WTC11 (cell line): ENCODE measurements at regions of chr15 and their contacts with region 1.

Region 1: GRCh38 chr15:47196057-47196456 is 521.2 kb upstream of the SEMA6D start:
- DNase-seq: peak; percentile 83
- ATAC-seq: peak; percentile 94
- H3K4me3 Mint-ChIP-seq: peak overlapping the region; percentile 47
- H3K27ac Mint-ChIP-seq: no peak overlapping the region
- H3K4me1 Mint-ChIP-seq: peaks cover 46% of the 10 kb centered on the region
- H3K27me3 Mint-ChIP-seq: peaks cover 30% of the 10 kb centered on the region
- CTCF ChIP-seq: peak; percentile 61

Region 2: DNA sequence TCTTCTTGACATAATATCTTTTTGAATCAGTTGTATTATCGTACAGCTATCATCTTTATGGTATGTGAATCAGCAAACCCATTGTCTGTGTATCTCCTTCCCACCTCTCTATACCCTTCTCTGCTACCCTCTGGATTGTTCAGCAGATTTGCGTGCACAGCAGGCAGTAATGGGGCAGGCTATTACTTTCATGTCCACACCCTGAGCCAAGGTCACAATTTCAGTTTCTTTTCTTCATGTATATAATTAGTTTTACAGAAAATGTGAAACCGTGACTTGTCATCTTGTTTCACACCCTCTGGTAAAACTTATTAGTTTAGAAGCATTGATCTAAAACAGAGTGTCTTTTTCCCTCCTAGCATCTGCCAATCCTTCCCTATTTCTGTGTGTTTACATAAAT is 249.1 kb before region 1 on chr15:
- CTCF ChIA-PET with region 1: no interaction called
- POLR2A ChIA-PET with region 1: no interaction called
- DNase-seq: no peak
- ATAC-seq: peak; percentile 46; the same call in 1 of the 2 replicates
- H3K4me3 Mint-ChIP-seq: no peak overlapping the region
- H3K27ac Mint-ChIP-seq: no peak overlapping the region
- H3K4me1 Mint-ChIP-seq: peaks cover 6% of the 10 kb centered on the region; the same call in 1 of the 2 replicates
- H3K27me3 Mint-ChIP-seq: no peaks in the 10 kb centered on the region
- CTCF ChIP-seq: no peak

Region 3: GRCh38 chr15:47258521-47258920 is 62.5 kb after region 1 on chr15:
- CTCF ChIA-PET with region 1: no interaction called
- POLR2A ChIA-PET with region 1: no interaction called
- DNase-seq: no peak
- ATAC-seq: no peak
- H3K4me3 Mint-ChIP-seq: no peak overlapping the region
- H3K27ac Mint-ChIP-seq: no peak overlapping the region
- H3K4me1 Mint-ChIP-seq: no peaks in the 10 kb centered on the region
- H3K27me3 Mint-ChIP-seq: no peaks in the 10 kb centered on the region
- CTCF ChIP-seq: no peak

Region 4: GRCh38 chr15:47374222-47374621 is 178.2 kb after region 1 on chr15:
- CTCF ChIA-PET with region 1: interaction called, 29 read pairs
- POLR2A ChIA-PET with region 1: no interaction called
- DNase-seq: peak; percentile 20
- ATAC-seq: peak; percentile 91
- H3K4me3 Mint-ChIP-seq: no peak overlapping the region
- H3K27ac Mint-ChIP-seq: no peak overlapping the region
- H3K4me1 Mint-ChIP-seq: peaks cover 16% of the 10 kb centered on the region
- H3K27me3 Mint-ChIP-seq: no peaks in the 10 kb centered on the region
- CTCF ChIP-seq: no peak

Region 5: GRCh38 chr15:47404877-47405276 is 208.8 kb after region 1 on chr15:
- CTCF ChIA-PET with region 1: interaction called, 35 read pairs
- POLR2A ChIA-PET with region 1: no interaction called
- DNase-seq: no peak
- ATAC-seq: peak; percentile 40
- H3K4me3 Mint-ChIP-seq: no peak overlapping the region
- H3K27ac Mint-ChIP-seq: no peak overlapping the region
- H3K4me1 Mint-ChIP-seq: peaks cover 64% of the 10 kb centered on the region
- H3K27me3 Mint-ChIP-seq: no peaks in the 10 kb centered on the region; the same call in none of the 2 replicates
- CTCF ChIP-seq: no peak

Region 6: DNA sequence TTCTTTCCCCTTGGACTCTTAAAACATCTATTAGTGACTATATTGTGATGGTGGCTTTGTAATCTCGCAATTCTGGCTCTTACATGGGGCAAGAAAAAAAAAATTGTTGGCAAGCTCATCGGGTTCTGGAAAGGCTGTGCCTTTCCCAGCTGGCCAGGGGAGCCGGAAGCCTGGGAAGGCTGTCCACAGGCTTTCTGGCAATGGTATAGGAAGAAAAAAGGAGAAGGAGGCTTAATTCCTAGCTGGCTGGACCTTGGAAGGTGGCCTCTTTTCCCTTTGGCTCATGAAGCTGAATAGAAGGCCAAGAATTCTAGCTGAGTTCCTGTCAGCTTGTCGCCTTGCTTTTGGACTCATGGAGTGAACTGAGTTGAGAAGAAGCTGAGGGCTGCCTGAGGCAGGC is 277.8 kb after region 1 on chr15:
- CTCF ChIA-PET with region 1: interaction called, 13 read pairs
- POLR2A ChIA-PET with region 1: no interaction called
- DNase-seq: no peak
- ATAC-seq: no peak
- H3K4me3 Mint-ChIP-seq: no peak overlapping the region
- H3K27ac Mint-ChIP-seq: no peak overlapping the region
- H3K4me1 Mint-ChIP-seq: peaks cover 8% of the 10 kb centered on the region
- H3K27me3 Mint-ChIP-seq: no peaks in the 10 kb centered on the region
- CTCF ChIP-seq: no peak

Region 7: DNA sequence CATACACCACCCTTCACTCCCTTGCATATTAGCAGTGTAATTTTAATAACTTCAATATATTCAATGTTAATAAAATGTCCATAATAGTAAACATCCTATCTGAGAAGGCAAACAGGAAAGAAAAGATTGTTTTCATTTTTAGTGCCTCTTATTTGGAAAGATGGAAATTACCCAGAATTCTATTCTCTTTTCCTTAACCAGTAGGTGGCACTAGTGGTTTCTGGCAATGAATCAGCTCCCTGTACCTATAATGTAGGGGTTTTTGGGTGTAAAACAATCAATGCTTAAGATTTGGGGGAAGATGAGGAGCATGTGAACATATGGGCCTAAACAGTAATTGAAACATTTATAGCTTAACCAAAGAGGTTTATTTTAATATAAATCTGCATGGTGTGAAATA is 515.6 kb after region 1 on chr15:
- CTCF ChIA-PET with region 1: interaction called, 19 read pairs
- POLR2A ChIA-PET with region 1: no interaction called
- DNase-seq: no peak
- ATAC-seq: no peak
- H3K4me3 Mint-ChIP-seq: no peak overlapping the region
- H3K27ac Mint-ChIP-seq: no peak overlapping the region
- H3K4me1 Mint-ChIP-seq: peaks cover 21% of the 10 kb centered on the region
- H3K27me3 Mint-ChIP-seq: peaks cover 18% of the 10 kb centered on the region
- CTCF ChIP-seq: peak; percentile 42; the same call in 1 of the 2 replicates

Region 8: DNA sequence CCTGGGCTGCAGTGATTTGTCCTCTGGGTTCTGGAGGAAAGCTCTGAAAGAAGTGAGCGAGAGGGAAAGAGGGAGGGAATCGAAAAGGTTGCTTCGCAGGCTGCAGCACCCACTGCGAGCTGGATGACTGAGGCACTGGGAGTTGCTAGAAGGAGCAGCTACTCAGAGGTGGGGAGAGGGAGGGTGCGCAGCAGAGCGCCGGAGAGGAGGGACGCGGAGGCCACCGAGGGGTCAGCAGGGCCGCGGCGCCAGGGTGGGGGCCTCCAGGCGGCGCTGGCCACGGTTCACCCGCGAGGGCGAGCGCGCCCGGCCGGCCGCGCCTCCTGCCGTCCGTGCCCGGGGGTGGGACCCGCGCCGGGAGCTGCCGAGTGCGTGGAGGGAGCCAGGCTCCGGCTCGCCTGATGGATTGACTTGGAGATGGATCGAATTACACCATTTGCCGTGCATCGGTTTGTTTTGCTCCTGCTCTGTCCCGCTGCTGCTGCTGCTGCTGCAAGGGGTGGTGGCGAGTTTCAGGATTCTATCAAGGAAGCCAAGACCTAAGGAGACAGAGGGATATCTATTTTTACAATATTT is 521.1 kb after region 1 on chr15 and contains the start of gene SEMA6D:
- CTCF ChIA-PET with region 1: interaction called, 19 read pairs
- POLR2A ChIA-PET with region 1: no interaction called
- DNase-seq: peak; percentile 76
- ATAC-seq: peak; percentile 76
- H3K4me3 Mint-ChIP-seq: peak within 1 kb of the TSS; percentile 92
- H3K27ac Mint-ChIP-seq: peak within 1 kb of the TSS; percentile 84
- H3K4me1 Mint-ChIP-seq: peaks cover 54% of the 10 kb centered on the region
- H3K27me3 Mint-ChIP-seq: peaks cover 56% of the 10 kb centered on the region
- CTCF ChIP-seq: no peak
- total RNA-seq, gene SEMA6D: 0.98 to 2.6 TPM (median 2.0 TPM) in 3 replicates